Activated CD8-positive, alpha-beta memory T cell treated with anti-CD3 and anti-CD28 coated beads, Interleukin-2, amount 10 ng/mL, durations not matched to agents 7 days and 5 days (primary cell): ENCODE measurements at regions of chr19 and their contacts with region 1.

Region 1: DNA sequence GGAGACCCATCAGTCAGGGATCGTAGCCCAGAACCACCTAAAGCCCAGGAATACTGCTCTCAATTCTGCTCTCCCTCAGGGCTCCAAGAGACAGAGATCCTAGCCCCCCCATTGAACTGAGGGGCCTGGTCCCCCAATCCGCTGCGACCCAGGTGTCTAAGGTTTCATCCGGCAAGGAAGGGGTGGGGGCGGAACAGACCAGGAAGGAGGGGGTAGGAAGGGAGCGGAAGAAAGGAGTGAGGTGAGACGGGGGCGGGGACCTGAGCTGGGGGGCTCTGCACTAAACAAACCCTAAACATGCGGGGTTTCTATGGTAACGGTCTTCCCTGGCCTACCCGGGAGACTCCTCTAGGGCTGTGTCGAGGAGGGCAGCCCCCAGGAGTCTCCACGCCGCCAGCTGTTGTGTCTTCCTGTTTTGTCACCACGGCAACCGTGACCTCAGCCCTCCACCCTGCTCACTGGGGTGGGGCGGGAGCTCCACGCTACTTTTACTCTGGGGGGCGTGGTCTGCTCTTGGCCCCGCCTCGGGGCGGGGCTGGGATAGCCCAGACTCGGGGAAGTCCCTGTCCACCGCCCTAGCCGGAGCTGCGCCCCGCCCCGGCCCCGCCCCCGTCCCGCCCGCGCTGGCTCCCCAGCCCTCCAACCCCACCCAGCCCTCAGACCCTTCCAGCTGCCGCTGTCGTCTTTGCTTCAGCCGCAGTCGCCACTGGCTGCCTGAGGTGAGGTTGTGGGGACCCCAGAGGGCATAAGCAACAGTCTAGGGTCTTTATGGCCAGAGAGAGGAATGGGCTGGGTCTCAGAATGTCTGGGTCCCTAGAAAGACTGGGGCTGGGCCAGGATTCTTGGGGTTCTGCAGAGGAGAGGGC is at the start of gene MYADM:
- DNase-seq: peak; percentile 99
- ATAC-seq: peak; percentile 67
- H3K4me3 Mint-ChIP-seq: peak within 1 kb of the TSS; percentile 97
- H3K27ac Mint-ChIP-seq: peak within 1 kb of the TSS; percentile 93
- H3K4me1 Mint-ChIP-seq: peaks cover 37% of the 10 kb centered on the region
- H3K27me3 Mint-ChIP-seq: no peaks in the 10 kb centered on the region
- total RNA-seq, gene MYADM: 52.2 to 69.4 TPM

Region 2: DNA sequence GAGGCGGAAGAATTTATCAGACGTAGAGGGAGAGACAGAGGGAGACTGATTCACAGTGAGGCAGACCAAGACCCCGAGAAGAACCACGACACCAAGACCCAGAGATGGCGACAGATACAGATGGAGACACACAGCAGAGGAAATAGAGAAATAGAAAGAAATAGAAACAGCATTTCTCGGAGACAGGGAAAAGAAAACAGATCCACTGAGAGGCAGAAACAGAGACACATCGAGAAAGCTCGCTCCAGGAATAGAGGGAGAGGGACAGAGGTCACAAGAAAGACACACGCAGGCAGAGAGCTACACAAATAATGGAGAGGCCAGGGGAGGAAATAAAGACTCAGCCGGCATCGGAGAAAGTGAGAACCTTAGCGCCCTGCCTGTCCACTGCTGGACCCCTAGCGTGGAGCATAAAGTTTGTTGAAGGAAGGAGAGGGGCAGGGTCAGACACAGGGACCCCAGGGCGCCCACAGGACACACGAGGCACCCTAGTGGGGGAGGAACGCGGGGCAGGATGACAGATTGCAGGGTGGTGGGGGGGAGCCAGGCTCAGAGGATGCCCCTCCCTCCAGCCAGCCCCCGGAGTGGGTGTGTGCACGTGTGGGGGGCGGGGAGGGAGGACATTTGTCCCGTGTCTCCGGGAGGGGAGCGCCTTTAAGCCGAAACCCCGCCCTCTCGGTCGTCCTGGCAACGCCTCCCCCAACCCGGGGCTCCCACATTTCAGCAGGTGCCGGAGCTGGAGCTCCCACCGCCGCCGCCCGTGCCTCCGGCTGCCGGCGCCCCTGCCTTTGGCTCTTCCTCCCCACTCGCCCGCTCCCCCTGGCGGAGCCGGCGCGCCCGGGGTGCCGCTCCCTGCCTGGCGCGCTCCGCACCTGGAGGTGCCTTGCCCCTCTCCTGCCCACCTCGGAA is 14.3 kb after region 1 on chr19 and contains the start of gene PRKCG:
- CTCF ChIA-PET with region 1: interaction called, 13 read pairs
- DNase-seq: peak; percentile 67
- ATAC-seq: peak; percentile 46
- H3K4me3 Mint-ChIP-seq: no peak within 1 kb of the TSS
- H3K27ac Mint-ChIP-seq: no peak within 1 kb of the TSS
- H3K4me1 Mint-ChIP-seq: peaks cover 20% of the 10 kb centered on the region
- H3K27me3 Mint-ChIP-seq: peaks cover 34% of the 10 kb centered on the region
- total RNA-seq, gene PRKCG: not detected

Region 3: DNA sequence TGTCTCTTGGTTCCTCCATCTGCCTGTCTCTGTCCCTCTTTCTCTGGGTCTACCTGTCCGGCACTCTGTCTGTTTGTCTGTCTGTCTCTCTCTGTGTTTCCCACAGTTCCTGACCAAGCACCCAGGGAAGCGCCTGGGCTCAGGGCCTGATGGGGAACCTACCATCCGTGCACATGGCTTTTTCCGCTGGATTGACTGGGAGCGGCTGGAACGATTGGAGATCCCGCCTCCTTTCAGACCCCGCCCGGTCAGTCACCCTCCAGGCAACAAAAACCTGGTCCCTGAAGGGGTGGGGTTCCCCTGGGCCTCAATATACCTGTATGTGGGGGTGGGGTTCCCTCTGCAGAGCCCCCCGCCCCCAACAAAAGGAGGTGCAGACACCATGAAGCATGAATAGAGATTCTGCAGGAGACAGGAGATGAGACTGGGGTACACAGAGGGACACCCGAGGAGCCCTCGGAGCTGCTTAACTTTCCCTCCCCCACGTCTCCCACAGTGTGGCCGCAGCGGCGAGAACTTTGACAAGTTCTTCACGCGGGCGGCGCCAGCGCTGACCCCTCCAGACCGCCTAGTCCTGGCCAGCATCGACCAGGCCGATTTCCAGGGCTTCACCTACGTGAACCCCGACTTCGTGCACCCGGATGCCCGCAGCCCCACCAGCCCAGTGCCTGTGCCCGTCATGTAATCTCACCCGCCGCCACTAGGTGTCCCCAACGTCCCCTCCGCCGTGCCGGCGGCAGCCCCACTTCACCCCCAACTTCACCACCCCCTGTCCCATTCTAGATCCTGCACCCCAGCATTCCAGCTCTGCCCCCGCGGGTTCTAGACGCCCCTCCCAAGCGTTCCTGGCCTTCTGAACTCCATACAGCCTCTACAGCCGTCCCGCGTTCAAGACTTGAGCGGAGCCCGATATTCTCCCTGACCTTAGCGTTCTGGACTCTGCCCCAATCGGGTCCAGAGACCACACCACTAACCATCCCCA is 39.0 kb after region 1 on chr19:
- CTCF ChIA-PET with region 1: no interaction called
- DNase-seq: peak; percentile 71
- ATAC-seq: peak; percentile 65
- H3K4me3 Mint-ChIP-seq: no peak overlapping the region
- H3K27ac Mint-ChIP-seq: no peak overlapping the region
- H3K4me1 Mint-ChIP-seq: peaks cover 25% of the 10 kb centered on the region
- H3K27me3 Mint-ChIP-seq: peaks cover 69% of the 10 kb centered on the region

Region 4: DNA sequence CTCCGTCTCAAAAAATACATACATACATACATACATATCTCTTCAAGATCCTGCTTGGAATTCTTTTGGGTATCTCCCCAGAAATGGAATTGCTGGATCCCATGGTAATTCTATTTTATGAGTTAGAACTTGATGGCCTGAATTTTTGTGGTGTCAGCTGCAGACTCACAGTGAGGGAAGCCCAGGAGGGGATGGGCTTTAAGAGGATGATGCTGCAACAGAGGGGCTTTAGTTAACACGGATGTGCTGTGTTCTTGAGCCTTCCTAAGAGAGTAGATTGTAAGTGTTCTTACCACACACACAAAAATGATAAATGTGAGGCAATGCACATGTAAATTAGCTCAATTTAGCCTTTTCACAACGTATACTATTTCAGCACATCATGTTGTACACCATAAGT is 155.7 kb after region 1 on chr19:
- CTCF ChIA-PET with region 1: interaction called, 10 read pairs
- DNase-seq: no peak
- ATAC-seq: no peak
- H3K4me3 Mint-ChIP-seq: no peak overlapping the region
- H3K27ac Mint-ChIP-seq: no peak overlapping the region
- H3K4me1 Mint-ChIP-seq: peaks cover 14% of the 10 kb centered on the region
- H3K27me3 Mint-ChIP-seq: peaks cover 18% of the 10 kb centered on the region